Activated CD8-positive, alpha-beta T cell treated with anti-CD3 and anti-CD28 coated beads, Interleukin-2, amount 10 ng/mL, durations not matched to agents 7 days and 5 days (primary cell): ENCODE measurements at regions of chr22 and their contacts with region 1.

Region 1: DNA sequence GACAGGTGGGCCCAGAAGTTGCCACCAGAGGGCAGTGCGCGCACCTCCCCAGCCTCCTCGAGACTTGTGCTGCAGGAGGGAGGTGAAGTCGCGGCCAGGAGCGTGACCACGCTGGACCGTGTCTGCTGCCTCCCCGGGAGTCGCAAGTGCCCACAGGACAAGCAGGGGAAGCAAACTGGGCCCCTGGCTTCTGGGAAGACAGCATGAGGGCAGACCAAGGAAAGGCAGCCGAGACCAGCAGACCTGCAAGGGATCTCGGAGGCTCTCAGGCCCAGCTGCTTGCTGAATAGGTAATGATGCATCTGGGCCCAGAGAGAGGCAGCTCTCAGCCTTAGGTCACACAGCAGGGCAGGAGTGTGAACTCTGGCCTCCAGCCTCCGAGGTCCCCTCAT is 17.0 kb upstream of the IL2RB start:
- DNase-seq: peak; percentile 92
- ATAC-seq: peak; percentile 48
- H3K4me3 Mint-ChIP-seq: peak overlapping the region; percentile 83
- H3K27ac Mint-ChIP-seq: peak overlapping the region; percentile 96
- H3K4me1 Mint-ChIP-seq: peaks cover 93% of the 10 kb centered on the region
- H3K27me3 Mint-ChIP-seq: no peaks in the 10 kb centered on the region

Region 2: GRCh38 chr22:37121887-37122591 is 44.6 kb before region 1 on chr22:
- CTCF ChIA-PET with region 1: interaction called, 35 read pairs
- POLR2A ChIA-PET with region 1: interaction called, 67 read pairs
- DNase-seq: peak; percentile 97
- ATAC-seq: peak; percentile 98
- H3K4me3 Mint-ChIP-seq: peak overlapping the region; percentile 78
- H3K27ac Mint-ChIP-seq: peak overlapping the region; percentile 100
- H3K4me1 Mint-ChIP-seq: peaks cover 90% of the 10 kb centered on the region
- H3K27me3 Mint-ChIP-seq: no peaks in the 10 kb centered on the region

Region 3: GRCh38 chr22:37148742-37149665 is 17.7 kb before region 1 on chr22:
- CTCF ChIA-PET with region 1: interaction called, 132 read pairs
- POLR2A ChIA-PET with region 1: interaction called, 100 read pairs
- DNase-seq: no peak
- ATAC-seq: peak; percentile 8
- H3K4me3 Mint-ChIP-seq: peak overlapping the region; percentile 84
- H3K27ac Mint-ChIP-seq: peak overlapping the region; percentile 99
- H3K4me1 Mint-ChIP-seq: peaks cover 56% of the 10 kb centered on the region
- H3K27me3 Mint-ChIP-seq: no peaks in the 10 kb centered on the region

Region 4: GRCh38 chr22:37178350-37179135 is 11.9 kb after region 1 on chr22:
- CTCF ChIA-PET with region 1: interaction called, 11 read pairs
- POLR2A ChIA-PET with region 1: interaction called, 7 read pairs
- DNase-seq: no peak
- ATAC-seq: no peak
- H3K4me3 Mint-ChIP-seq: no peak overlapping the region
- H3K27ac Mint-ChIP-seq: no peak overlapping the region
- H3K4me1 Mint-ChIP-seq: peaks cover 39% of the 10 kb centered on the region
- H3K27me3 Mint-ChIP-seq: peaks cover 6% of the 10 kb centered on the region

Region 5: DNA sequence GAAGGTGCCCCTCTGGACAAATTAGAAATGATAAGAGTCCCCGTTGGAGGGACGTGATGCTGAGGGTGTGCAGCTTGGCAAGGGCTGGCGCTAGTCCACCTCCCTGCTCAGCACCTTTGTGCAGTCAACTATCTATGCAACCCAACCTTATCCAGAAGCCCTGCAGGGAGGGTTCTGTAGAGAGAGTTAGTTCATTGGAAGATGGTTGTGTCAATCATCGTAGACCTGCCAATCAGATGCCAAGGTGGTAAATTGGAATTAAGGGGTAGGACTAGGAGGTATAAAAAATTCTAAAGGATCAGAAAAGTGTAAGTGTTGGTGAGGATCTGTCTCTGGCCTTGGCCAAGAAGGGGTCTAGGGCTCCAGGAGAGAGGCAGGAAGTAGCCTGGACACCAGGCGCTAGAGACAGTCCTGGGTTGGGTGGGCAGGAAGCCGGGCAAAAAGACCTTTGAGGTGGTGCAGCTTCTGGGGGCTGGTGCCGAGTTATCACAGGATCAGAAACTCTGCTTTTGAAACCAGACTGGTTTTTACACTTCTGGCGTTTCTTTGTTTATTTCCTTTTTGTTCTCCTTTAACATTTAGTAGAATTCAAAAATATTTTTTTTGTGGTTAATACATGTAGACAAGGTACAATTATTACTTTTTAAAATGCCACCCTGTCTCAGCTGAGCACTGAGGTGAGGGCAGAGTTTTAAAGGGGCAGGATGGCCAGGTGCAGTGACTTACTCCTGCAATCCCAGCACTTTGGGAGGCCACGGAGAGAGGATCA is 19.7 kb after region 1 on chr22:
- CTCF ChIA-PET with region 1: interaction called, 280 read pairs
- POLR2A ChIA-PET with region 1: interaction called, 6 read pairs
- DNase-seq: peak; percentile 80
- ATAC-seq: peak; percentile 84
- H3K4me3 Mint-ChIP-seq: peak overlapping the region; percentile 39
- H3K27ac Mint-ChIP-seq: peak overlapping the region; percentile 86
- H3K4me1 Mint-ChIP-seq: peaks cover 80% of the 10 kb centered on the region
- H3K27me3 Mint-ChIP-seq: no peaks in the 10 kb centered on the region

Region 6: GRCh38 chr22:37193629-37194191 is 27.0 kb after region 1 on chr22:
- CTCF ChIA-PET with region 1: interaction called, 280 read pairs
- POLR2A ChIA-PET with region 1: interaction called, 34 read pairs
- DNase-seq: peak; percentile 70
- ATAC-seq: peak; percentile 29
- H3K4me3 Mint-ChIP-seq: peak overlapping the region; percentile 16
- H3K27ac Mint-ChIP-seq: peak overlapping the region; percentile 86
- H3K4me1 Mint-ChIP-seq: peaks cover 75% of the 10 kb centered on the region
- H3K27me3 Mint-ChIP-seq: no peaks in the 10 kb centered on the region